ENCODE measurements at regions of chr16 and their contacts with region 1.

Region 1: DNA sequence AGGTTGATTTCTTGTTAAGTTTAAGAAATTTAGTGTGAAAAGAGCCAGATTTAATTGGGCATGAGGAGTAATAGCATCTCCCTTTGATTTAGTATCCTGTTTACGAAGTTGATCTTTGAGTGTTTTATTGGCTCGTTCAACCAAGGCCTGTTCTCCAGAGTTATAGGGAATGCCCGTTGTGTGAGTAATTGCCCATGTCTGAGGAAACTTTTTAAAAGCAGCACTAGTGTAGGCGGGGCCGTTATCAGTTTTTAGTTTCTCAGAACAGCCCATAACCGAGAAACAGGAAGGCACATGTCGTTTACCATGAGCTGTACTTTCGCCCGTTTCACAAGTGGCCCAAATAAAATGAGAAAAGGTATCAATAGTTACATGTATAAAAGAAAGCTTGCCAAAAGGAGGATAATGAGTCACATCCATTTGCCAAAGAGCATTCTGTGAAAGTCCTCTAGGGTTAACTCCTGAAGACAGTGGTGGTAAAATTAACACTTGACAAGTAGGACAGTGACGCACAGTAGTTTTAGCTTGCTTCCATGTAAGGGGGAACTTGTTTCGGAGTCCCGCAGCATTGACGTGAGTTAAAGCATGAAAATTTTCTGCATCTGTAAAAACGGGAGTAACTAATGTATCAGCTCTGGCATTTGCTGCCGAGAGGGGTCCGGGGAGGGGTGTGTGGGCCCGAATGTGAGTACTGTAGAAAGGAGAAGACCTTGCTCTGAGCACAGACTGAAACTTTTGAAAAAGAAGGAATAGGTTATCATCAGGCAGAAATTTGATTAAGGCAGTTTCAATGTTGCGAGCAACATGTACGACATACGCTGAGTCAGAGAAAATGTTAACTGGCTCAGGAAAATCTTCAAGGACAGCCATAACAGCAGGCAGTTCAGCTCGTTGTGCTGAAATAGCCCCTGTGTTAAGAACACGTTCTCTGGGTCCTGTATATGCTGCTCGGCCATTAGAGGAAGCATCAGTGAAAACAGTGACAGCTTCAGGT is 18.5 kb upstream of the KCTD5 start:
- DNase-seq: peak; percentile 54
- H3K4me3 ChIP-seq: no peak overlapping the region
- H3K27ac ChIP-seq: peak overlapping the region; percentile 69 to 86 (median 77)
- H3K4me1 ChIP-seq: peaks cover 8 to 25% (median 18%) of the 10 kb centered on the region in 4 donors
- H3K27me3 ChIP-seq: no peaks in the 10 kb centered on the region
- CTCF ChIP-seq: no peak
- EP300 ChIP-seq: no peak
- POLR2A ChIP-seq: no peak

Region 2: GRCh38 chr16:1983544-1984346 is 680.1 kb before region 1 on chr16 and contains the start of gene GFER:
- in situ Hi-C with region 1: no loop called
- intact Hi-C with region 1: loop called (anchors 10 kb)
- DNase-seq: peak; percentile 92
- H3K4me3 ChIP-seq: peak within 1 kb of the TSS; percentile 58 to 90 (median 82)
- H3K27ac ChIP-seq: peak within 1 kb of the TSS; percentile 91 to 95 (median 93)
- H3K4me1 ChIP-seq: peaks cover 22 to 62% (median 57%) of the 10 kb centered on the region in 4 donors
- H3K27me3 ChIP-seq: peaks cover 37% of the 10 kb centered on the region
- CTCF ChIP-seq: peak in 4 of 5 experiments; percentile 24 to 45 (median 30)
- EP300 ChIP-seq: no peak
- POLR2A ChIP-seq: peak; percentile 71
- total RNA-seq, gene GFER: 29.9 to 117 (median 64.3) TPM

Region 3: DNA sequence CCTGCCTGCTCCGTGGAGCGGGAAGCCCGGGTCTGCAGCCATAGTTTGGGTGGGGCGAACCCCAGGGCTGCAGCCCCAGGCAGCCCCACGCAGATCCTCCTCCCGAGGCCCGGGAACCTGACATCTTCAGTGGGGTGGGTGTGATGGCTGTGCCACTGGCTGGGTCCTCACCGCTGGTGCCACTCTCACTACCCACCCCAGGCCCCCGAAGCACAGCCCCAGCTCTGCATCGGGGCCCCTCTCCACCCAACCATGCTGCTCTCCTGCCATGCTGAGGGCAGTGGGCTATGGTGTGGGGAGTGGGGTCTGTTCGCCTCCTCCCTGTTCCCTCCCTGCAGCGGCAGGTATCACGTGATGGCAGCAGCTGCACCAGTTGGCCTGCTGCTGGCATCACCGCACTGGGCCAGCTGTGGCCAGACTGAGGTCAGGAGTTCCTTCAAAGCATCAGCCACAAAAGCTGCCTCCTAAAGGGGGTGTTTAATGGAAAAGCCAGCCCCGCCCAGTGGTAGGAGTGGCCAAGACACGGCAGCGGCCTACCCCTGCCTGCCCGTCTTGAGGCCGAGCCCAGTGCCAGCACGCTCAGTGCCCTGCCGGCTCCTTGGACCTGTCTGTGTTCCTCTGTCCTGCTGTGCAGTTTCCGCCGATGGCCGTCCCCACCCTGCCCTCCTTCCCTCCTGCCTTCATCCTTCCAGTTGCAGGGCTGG is 29.2 kb after region 1 on chr16:
- in situ Hi-C with region 1: no loop called
- intact Hi-C with region 1: no loop called
- DNase-seq: peak; percentile 36
- H3K4me3 ChIP-seq: no peak overlapping the region
- H3K27ac ChIP-seq: peak overlapping the region in 2 of 4 donors; percentile 21 to 46
- H3K4me1 ChIP-seq: peaks cover 0 to 15% (median 5%) of the 10 kb centered on the region in 4 donors
- H3K27me3 ChIP-seq: no peaks in the 10 kb centered on the region
- CTCF ChIP-seq: no peak
- EP300 ChIP-seq: no peak
- POLR2A ChIP-seq: no peak

Region 4: GRCh38 chr16:2777231-2777902 is 113.5 kb after region 1 on chr16 and contains the start of gene ELOB:
- in situ Hi-C with region 1: no loop called
- intact Hi-C with region 1: no loop called
- DNase-seq: peak; percentile 91
- H3K4me3 ChIP-seq: peak within 1 kb of the TSS; percentile 88 to 98 (median 96)
- H3K27ac ChIP-seq: peak within 1 kb of the TSS; percentile 99 to 100 (median 100)
- H3K4me1 ChIP-seq: peaks cover 16 to 27% (median 22%) of the 10 kb centered on the region in 4 donors
- H3K27me3 ChIP-seq: no peaks in the 10 kb centered on the region
- CTCF ChIP-seq: no peak
- EP300 ChIP-seq: no peak
- POLR2A ChIP-seq: peak; percentile 71
- total RNA-seq, gene ELOB: 133 to 433 (median 288) TPM